Activated T-helper 1 cell treated with anti-CD3 and anti-CD28 coated beads, Interleukin-12 subunit alpha, Interleukin-12 subunit beta, Interleukin-2, Interleukin-4 antibody, amounts not matched to agents 30 ng/mL and 10 ng/mL and 1 ng/mL, durations not matched to agents 14 hours and 24 hours and 36 hours (primary cell): ENCODE measurements at regions of chr15 and their contacts with region 1.

Region 1: DNA sequence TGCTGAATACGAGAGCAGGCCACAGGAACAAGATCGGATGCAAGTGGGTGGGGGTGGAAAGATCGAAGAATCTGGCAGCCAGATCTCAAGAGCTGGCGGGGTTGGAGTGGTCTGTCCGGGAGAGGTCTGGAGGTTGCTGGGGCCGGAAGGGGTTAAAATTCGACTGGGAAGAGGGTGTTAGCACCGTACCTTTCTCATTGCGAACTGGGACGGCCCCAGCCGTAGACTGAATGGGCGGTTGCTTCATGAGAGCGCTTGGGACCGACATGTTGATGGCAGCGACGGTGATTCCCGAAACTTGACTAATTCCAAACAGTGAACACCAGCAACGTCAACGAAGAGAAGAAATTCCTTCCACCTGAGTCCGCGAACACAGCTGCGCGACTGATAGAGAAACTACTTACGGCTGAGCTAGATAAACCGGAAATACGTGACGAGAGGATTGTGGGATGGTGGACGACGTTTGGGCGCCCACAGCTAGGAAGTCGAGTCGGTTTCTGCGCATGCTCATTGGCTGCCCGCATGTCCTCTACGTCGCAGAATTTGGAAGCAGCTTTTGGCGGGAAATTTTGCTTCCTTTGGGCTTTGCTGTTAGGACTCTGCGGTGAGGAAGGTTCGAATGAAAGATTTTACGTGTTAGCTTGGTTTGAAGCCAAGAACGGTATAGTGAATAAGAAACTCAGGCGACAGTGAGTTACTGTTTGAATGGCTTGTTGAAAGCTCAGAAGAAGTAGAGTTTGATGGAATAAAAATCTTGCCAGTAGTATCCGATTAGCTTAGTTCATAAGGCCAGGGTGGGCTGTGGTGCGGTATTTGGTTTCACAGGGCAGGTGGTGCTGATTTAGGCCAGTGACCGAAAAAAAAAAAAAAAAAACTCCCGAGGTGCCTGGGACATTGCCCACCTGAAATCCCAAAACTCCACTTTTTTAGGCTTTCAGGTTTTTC is at the start of gene MFAP1:
- DNase-seq: peak; percentile 91
- H3K4me3 Mint-ChIP-seq: peak within 1 kb of the TSS; percentile 97
- H3K27ac Mint-ChIP-seq: peak within 1 kb of the TSS; percentile 97
- H3K4me1 Mint-ChIP-seq: peaks cover 46% of the 10 kb centered on the region
- H3K27me3 Mint-ChIP-seq: no peaks in the 10 kb centered on the region
- total RNA-seq, gene MFAP1: 46.4 and 46.6 TPM in 2 replicates

Region 2: DNA sequence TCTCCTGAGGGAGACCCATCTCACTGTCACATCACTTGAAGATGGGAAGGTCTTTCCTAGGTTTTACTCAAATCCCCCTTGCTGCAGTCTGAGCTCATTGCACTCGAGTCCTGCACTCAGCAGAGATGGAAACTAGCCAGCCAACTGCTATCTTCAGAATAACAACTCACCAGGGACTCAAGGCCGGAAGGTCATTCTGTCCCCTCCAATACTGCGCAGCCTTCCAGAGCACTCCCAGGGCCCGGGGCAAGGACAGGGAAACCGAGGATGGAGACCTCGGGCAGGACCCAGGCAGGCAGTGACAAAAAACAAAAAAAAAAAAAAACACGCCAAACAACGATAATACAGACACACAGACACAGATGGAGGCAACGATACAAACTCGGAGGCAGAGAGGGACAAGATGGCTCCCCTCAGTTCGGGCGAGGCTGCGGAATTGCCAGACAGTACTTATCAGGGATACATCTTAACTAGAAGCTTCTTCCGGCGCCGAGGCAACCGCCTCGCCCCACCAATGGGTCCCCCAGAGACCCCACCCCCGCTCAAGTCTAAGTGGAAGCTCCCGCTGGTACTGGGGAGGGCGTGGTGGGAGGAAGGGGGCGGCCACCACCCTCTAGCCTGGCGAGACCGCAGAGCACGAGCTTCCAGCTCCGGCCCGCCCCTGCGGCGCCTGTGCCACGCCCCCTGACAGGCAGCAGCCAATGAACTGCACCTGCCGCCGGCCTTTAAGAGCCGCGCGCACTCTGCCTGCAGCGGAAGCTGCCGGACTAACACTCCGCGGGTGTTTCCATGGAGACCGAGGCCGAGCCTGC is 314.2 kb before region 1 on chr15:
- intact Hi-C with region 1: loop called (anchors 10 kb)
- DNase-seq: peak; percentile 98
- H3K4me3 Mint-ChIP-seq: peak overlapping the region; percentile 87
- H3K27ac Mint-ChIP-seq: peak overlapping the region; percentile 92
- H3K4me1 Mint-ChIP-seq: peaks cover 56% of the 10 kb centered on the region
- H3K27me3 Mint-ChIP-seq: peaks cover 6% of the 10 kb centered on the region

Region 3: GRCh38 chr15:43762824-43763223 is 61.8 kb before region 1 on chr15:
- intact Hi-C with region 1: no loop called
- DNase-seq: no peak
- H3K4me3 Mint-ChIP-seq: no peak overlapping the region
- H3K27ac Mint-ChIP-seq: no peak overlapping the region
- H3K4me1 Mint-ChIP-seq: peaks cover 10% of the 10 kb centered on the region
- H3K27me3 Mint-ChIP-seq: no peaks in the 10 kb centered on the region

Region 4: DNA sequence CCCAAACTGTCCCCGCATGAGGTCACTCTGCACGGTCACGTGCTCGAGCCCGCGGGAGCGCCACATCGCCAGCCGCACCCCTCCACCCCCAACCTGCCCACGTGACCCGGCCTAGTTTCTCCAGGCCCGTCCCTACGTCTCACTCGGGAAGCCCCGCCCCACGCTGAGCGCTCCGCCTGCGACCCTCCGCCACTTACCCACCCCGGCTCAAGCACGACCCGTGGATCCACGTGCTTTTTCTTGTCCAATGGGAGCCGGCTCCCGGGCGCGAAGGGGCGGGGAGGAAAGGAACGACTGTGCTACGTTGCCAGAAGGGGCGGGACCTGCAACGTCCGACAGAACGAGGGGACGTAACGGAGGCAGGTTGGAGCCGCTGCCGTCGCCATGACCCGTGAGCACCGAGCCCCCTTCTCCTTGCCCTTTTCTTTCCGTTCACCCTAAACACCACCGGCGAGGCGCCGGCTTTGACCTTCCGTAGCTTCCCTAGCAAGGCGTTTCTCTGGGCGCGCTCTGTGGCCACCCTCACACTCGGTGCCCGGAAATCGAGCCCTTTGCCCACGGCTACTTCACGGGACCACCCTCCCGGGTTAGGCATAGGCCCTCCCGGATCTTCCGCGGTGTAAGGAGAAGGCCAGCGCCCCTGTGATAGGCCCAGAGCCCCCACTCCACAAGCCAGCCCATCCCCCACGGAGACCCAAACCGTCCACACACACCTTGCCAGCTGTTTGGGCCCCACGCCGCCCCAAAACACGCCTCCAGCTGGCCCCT is 32.4 kb before region 1 on chr15 and contains the start of gene SERF2:
- intact Hi-C with region 1: loop called (anchors 1 kb)
- DNase-seq: peak; percentile 99
- H3K4me3 Mint-ChIP-seq: peak within 1 kb of the TSS; percentile 97
- H3K27ac Mint-ChIP-seq: peak within 1 kb of the TSS; percentile 94
- H3K4me1 Mint-ChIP-seq: peaks cover 43% of the 10 kb centered on the region
- H3K27me3 Mint-ChIP-seq: no peaks in the 10 kb centered on the region
- total RNA-seq, gene SERF2: 531 and 540 TPM in 2 replicates

Region 5: GRCh38 chr15:43800286-43801141 is 24.1 kb before region 1 on chr15 and contains the start of gene HYPK:
- intact Hi-C with region 1: loop called (anchors 1 kb)
- DNase-seq: peak; percentile 89
- H3K4me3 Mint-ChIP-seq: peak within 1 kb of the TSS; percentile 99
- H3K27ac Mint-ChIP-seq: peak within 1 kb of the TSS; percentile 94
- H3K4me1 Mint-ChIP-seq: peaks cover 56% of the 10 kb centered on the region
- H3K27me3 Mint-ChIP-seq: no peaks in the 10 kb centered on the region
- total RNA-seq, gene HYPK: 22.0 TPM in 2 replicates

Region 6: GRCh38 chr15:44286814-44287452 is 462.4 kb after region 1 on chr15:
- intact Hi-C with region 1: loop called (anchors 10 kb)
- DNase-seq: no peak
- H3K4me3 Mint-ChIP-seq: peak overlapping the region; percentile 92
- H3K27ac Mint-ChIP-seq: peak overlapping the region; percentile 100
- H3K4me1 Mint-ChIP-seq: peaks cover 44% of the 10 kb centered on the region
- H3K27me3 Mint-ChIP-seq: peaks cover 9% of the 10 kb centered on the region

Region 7: DNA sequence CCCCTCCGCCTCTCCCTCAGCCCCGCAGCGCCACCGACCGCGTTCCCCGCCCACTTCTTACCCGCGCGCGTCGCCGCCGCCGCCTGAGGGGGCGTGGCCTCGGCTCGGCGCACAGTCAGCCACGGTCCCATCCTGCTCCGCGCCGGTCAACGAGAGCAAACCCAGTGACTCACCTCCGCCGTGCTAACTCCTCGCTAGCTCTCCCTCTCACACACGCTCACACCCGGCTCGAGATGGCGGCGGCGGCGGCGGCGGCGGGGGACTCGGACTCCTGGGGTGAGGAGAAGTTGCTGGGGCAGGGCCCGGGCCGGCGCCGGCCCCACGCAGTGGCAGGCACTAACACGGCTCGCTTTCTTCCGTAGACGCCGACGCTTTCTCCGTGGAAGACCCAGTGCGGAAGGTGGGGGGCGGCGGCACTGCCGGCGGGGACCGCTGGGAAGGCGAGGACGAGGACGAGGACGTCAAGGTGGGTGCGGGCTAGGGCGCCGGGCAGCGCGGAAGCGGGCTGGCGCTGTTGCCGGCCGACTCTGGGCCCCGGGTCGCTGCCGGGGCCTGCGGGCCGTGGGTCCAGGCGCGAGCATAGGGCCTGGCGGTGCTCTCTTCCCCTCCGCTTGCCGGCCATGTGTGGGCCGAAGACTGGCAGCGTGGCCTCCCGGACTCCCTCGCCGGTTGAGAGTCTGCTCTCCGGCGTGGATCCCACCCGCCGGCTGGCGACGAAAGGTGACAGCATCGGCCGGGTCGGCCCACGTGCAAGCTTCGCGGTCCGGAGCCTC is 712.6 kb after region 1 on chr15 and contains the start of gene EIF3J:
- intact Hi-C with region 1: loop called (anchors 5 kb)
- DNase-seq: peak; percentile 95
- H3K4me3 Mint-ChIP-seq: peak within 1 kb of the TSS; percentile 93
- H3K27ac Mint-ChIP-seq: peak within 1 kb of the TSS; percentile 98
- H3K4me1 Mint-ChIP-seq: peaks cover 52% of the 10 kb centered on the region
- H3K27me3 Mint-ChIP-seq: no peaks in the 10 kb centered on the region
- total RNA-seq, gene EIF3J: 163 and 168 TPM in 2 replicates

Region 8: GRCh38 chr15:44728576-44729407 is 904.2 kb after region 1 on chr15:
- intact Hi-C with region 1: loop called (anchors 5 kb)
- DNase-seq: peak; percentile 96
- H3K4me3 Mint-ChIP-seq: peak overlapping the region; percentile 100
- H3K27ac Mint-ChIP-seq: peak overlapping the region; percentile 99
- H3K4me1 Mint-ChIP-seq: peaks cover 77% of the 10 kb centered on the region
- H3K27me3 Mint-ChIP-seq: no peaks in the 10 kb centered on the region